ENCODE measurements at regions of chr5 and their contacts with region 1.

Region 1: DNA sequence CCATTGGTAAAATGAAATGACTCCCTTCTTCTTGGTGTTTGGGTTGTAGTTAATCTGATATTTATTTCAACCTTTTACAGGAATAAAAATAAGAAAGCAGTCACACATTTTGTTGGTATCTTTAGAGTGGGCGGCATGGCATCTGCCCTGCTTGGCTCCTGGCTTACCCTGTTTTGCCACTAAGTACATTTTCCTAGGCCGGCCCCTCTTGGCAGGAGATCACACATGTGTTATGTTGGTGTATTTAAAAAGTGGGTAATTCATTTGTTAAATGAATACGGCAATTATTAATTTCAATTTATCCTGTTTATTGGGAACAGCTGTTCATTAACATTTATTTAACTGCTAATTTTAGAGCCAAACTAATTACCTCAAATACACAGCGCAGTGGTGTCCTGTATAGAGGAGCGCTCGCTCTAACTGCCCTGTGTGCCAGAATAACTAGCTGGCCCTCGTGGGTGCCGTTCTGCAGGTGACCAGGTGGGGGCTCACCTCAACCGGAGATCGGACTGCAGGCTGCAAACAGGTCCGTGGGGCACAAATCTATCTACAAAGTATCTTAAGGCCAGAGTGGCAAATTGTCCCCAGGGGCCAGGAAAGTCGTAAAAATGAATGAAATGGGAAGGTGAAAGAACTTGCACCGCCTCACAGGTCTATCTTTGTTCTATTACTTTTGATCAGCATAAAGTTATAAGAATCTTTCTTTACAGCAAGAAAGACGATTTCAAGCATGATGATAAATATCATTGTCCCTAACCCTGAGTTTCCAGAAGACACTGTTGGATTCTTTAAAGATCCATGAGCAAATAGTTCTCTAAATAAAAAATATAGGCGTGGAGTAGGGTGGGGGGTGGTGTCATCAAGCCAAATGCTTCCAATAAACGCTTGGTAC is 26.2 kb upstream of the GPR151 start:
- DNase-seq: peak; percentile 44
- H3K4me3 ChIP-seq: no peak overlapping the region
- H3K27ac ChIP-seq: no peak overlapping the region
- H3K4me1 ChIP-seq: peaks cover 4% of the 10 kb centered on the region
- H3K27me3 ChIP-seq: no peaks in the 10 kb centered on the region
- CTCF ChIP-seq: peak; percentile 96

Region 2: DNA sequence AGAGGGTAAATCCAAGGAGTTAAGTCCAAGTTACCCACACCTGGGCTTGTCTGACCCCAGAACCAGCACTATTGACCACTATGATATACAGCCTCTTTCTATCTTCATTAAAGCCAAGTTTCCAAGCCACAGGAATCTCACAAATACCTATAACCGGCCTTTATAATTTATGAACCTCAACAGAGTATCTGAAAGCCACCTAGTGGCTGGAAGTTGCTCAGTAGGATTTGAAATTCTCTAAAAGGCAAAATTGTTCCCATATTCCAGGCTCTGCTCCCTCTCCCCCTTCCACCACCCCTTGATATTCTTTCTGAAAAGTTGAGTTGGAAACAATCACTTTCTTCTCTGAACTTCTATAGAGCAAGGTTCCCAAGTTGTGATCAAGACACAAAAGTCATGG is 80.2 kb after region 1 on chr5:
- CTCF ChIA-PET with region 1: no interaction called
- dilution Hi-C with region 1: no loop called
- in situ Hi-C with region 1: no loop called
- intact Hi-C with region 1: loop called (anchors 1 kb)
- DNase-seq: no peak
- H3K4me3 ChIP-seq: no peak overlapping the region
- H3K27ac ChIP-seq: no peak overlapping the region
- H3K4me1 ChIP-seq: no peaks in the 10 kb centered on the region
- H3K27me3 ChIP-seq: no peaks in the 10 kb centered on the region
- CTCF ChIP-seq: peak; percentile 37 to 52

Region 3: DNA sequence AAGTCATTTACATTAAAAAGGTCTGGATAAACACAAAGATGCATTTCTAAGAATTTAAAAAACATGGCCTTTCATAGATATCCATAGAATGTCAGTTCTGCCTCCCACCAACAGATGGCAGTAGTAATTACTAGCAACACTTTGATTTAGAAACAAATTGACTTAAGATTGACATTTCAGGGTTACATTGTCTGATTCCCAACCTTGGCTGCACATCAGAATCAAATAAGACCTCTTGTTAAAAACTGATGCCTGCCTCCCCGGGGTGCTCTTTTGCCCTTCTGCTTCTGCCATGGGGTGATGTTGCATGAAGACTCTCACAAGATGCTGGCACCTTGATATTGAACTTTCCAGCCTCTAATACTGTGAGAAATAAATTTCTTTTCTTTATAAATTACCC is 120.0 kb after region 1 on chr5:
- CTCF ChIA-PET with region 1: no interaction called
- dilution Hi-C with region 1: no loop called
- in situ Hi-C with region 1: no loop called
- intact Hi-C with region 1: loop called (anchors 5 kb)
- DNase-seq: peak; percentile 22
- H3K4me3 ChIP-seq: no peak overlapping the region
- H3K27ac ChIP-seq: no peak overlapping the region
- H3K4me1 ChIP-seq: no peaks in the 10 kb centered on the region
- H3K27me3 ChIP-seq: no peaks in the 10 kb centered on the region
- CTCF ChIP-seq: peak; percentile 63 to 72

Region 4: GRCh38 chr5:146832985-146833734 is 291.0 kb after region 1 on chr5:
- CTCF ChIA-PET with region 1: no interaction called
- dilution Hi-C with region 1: no loop called
- in situ Hi-C with region 1: no loop called
- intact Hi-C with region 1: no loop called
- DNase-seq: peak; percentile 92
- H3K4me3 ChIP-seq: no peak overlapping the region
- H3K27ac ChIP-seq: no peak overlapping the region
- H3K4me1 ChIP-seq: no peaks in the 10 kb centered on the region
- H3K27me3 ChIP-seq: no peaks in the 10 kb centered on the region
- CTCF ChIP-seq: no peak

Region 5: GRCh38 chr5:146947181-146947941 is 405.2 kb after region 1 on chr5:
- CTCF ChIA-PET with region 1: no interaction called
- dilution Hi-C with region 1: no loop called
- in situ Hi-C with region 1: no loop called
- intact Hi-C with region 1: loop called (anchors 5 kb)
- DNase-seq: peak; percentile 11
- H3K4me3 ChIP-seq: no peak overlapping the region
- H3K27ac ChIP-seq: no peak overlapping the region
- H3K4me1 ChIP-seq: no peaks in the 10 kb centered on the region
- H3K27me3 ChIP-seq: no peaks in the 10 kb centered on the region
- CTCF ChIP-seq: peak; percentile 51 to 57

Region 6: GRCh38 chr5:147188200-147189108 is 646.2 kb after region 1 on chr5:
- CTCF ChIA-PET with region 1: interaction called, 6 read pairs
- dilution Hi-C with region 1: no loop called
- in situ Hi-C with region 1: loop called (anchors 10 to 25 kb)
- intact Hi-C with region 1: loop called (anchors 1 kb)
- DNase-seq: peak; percentile 33
- H3K4me3 ChIP-seq: no peak overlapping the region
- H3K27ac ChIP-seq: no peak overlapping the region
- H3K4me1 ChIP-seq: no peaks in the 10 kb centered on the region
- H3K27me3 ChIP-seq: no peaks in the 10 kb centered on the region
- CTCF ChIP-seq: peak; percentile 73 to 76

Measured in mammary epithelial cell (primary cell).